ENCODE measurements at regions of chr11 and their contacts with region 1.

Region 1: GRCh38 chr11:46006418-46007070 is 84.1 kb downstream of the LARGE2 start:
- DNase-seq: peak; percentile 33
- H3K4me3 Mint-ChIP-seq: no peak overlapping the region
- H3K27ac Mint-ChIP-seq: no peak overlapping the region
- H3K4me1 Mint-ChIP-seq: no peaks in the 10 kb centered on the region
- H3K27me3 Mint-ChIP-seq: no peaks in the 10 kb centered on the region

Region 2: GRCh38 chr11:45872513-45873356 is 133.8 kb before region 1 on chr11:
- CTCF ChIA-PET with region 1: interaction called, 10 read pairs
- DNase-seq: peak; percentile 57
- H3K4me3 Mint-ChIP-seq: no peak overlapping the region
- H3K27ac Mint-ChIP-seq: no peak overlapping the region
- H3K4me1 Mint-ChIP-seq: no peaks in the 10 kb centered on the region
- H3K27me3 Mint-ChIP-seq: no peaks in the 10 kb centered on the region